MCF 10A (cell line): ENCODE measurements at regions of chr2 and their contacts with region 1.

Region 1: GRCh38 chr2:213934560-213934959 is 476.3 kb upstream of the VWC2L start:
- DNase-seq: peak; percentile 42
- H3K4me3 Mint-ChIP-seq: no peak overlapping the region
- H3K27ac Mint-ChIP-seq: no peak overlapping the region
- H3K4me1 Mint-ChIP-seq: peaks cover under 1% of the 10 kb centered on the region
- H3K27me3 Mint-ChIP-seq: no peaks in the 10 kb centered on the region
- CTCF ChIP-seq: peak; percentile 26

Region 2: DNA sequence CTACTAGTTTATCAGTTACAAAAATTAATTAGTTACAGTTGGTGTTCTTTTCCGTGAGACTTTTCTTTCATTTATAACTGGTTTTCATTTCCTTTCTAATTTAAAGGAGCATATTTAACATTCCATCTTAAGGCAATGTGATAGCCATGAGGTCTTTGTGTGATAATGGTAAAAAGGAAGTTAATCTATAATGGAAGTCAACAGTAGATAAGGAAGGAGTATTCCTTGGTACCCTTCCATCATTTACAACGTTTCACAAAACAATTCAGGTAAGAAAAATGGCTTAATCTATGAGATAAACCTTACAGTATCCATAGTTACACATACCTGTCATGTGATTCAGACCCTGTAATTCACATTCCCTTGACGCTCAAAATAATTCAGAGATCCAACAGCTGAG is 49.1 kb before region 1 on chr2:
- CTCF ChIA-PET with region 1: no interaction called
- POLR2A ChIA-PET with region 1: no interaction called
- intact Hi-C with region 1: no loop called
- DNase-seq: no peak
- H3K4me3 Mint-ChIP-seq: no peak overlapping the region
- H3K27ac Mint-ChIP-seq: no peak overlapping the region
- H3K4me1 Mint-ChIP-seq: no peaks in the 10 kb centered on the region
- H3K27me3 Mint-ChIP-seq: no peaks in the 10 kb centered on the region
- CTCF ChIP-seq: no peak

Region 3: GRCh38 chr2:214107726-214108125 is 173.2 kb after region 1 on chr2:
- CTCF ChIA-PET with region 1: no interaction called
- POLR2A ChIA-PET with region 1: no interaction called
- intact Hi-C with region 1: no loop called
- DNase-seq: no peak
- H3K4me3 Mint-ChIP-seq: no peak overlapping the region
- H3K27ac Mint-ChIP-seq: no peak overlapping the region
- H3K4me1 Mint-ChIP-seq: peaks cover 20% of the 10 kb centered on the region
- H3K27me3 Mint-ChIP-seq: no peaks in the 10 kb centered on the region
- CTCF ChIP-seq: no peak

Region 4: GRCh38 chr2:215931256-215931903 is 1996.8 kb after region 1 on chr2:
- CTCF ChIA-PET with region 1: no interaction called
- POLR2A ChIA-PET with region 1: no interaction called
- intact Hi-C with region 1: loop called (anchors 10 kb)
- DNase-seq: peak; percentile 82
- H3K4me3 Mint-ChIP-seq: no peak overlapping the region
- H3K27ac Mint-ChIP-seq: no peak overlapping the region
- H3K4me1 Mint-ChIP-seq: peaks cover 14% of the 10 kb centered on the region
- H3K27me3 Mint-ChIP-seq: no peaks in the 10 kb centered on the region
- CTCF ChIP-seq: peak; percentile 83